B cell (primary cell): ENCODE measurements at regions of chr14 and their contacts with region 1.

Region 1: GRCh38 chr14:23301288-23301968 is 1.2 kb downstream of the PPP1R3E start:
- DNase-seq: peak; percentile 100
- ATAC-seq: peak; percentile 75
- H3K4me3 ChIP-seq: peak overlapping the region in 4 of 5 experiments; percentile 72 to 86 (median 82)
- H3K4me3 Mint-ChIP-seq: peak overlapping the region; percentile 98
- H3K27ac ChIP-seq: peak overlapping the region; percentile 95 to 96
- H3K27ac Mint-ChIP-seq: peak overlapping the region; percentile 95
- H3K4me1 ChIP-seq: peaks cover 24 to 26% of the 10 kb centered on the region in 2 donors
- H3K4me1 Mint-ChIP-seq: peaks cover 34% of the 10 kb centered on the region
- H3K27me3 ChIP-seq: no peaks in the 10 kb centered on the region
- H3K27me3 Mint-ChIP-seq: no peaks in the 10 kb centered on the region
- CTCF ChIP-seq: peak; percentile 81

Region 2: DNA sequence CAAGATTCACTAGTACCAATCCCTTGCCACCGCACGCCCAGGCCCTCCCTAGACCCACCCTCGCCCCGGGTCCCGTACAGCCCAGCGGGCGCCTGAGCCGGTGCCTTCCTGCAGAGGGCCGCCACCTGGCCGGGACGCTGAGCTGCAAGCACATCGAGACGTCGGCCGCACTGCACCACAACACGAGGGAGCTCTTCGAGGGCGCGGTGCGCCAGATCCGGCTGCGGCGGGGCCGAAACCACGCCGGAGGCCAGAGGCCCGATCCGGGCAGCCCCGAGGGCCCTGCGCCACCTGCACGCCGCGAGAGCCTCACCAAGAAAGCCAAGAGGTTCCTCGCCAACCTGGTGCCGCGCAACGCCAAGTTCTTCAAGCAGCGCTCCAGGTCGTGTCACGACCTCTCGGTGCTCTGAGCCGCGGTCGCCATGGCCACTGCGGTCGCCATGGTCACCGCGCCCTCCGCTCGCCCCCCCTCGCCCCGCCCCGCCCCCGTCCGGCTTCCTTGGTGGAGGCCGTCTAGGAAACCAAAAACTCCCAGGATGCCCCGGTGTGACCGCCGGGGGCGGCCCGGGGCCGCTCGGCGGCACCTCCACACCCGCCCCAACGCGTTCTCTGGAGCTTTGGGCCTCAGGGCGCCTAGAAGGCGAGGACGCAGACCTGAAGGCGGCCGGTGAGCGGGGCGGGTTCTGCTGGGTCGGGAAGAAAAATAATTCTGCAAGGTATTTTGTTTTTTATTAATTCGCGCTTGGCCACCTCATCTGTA is 414.7 kb before region 1 on chr14:
- CTCF ChIA-PET with region 1: no interaction called
- POLR2A ChIA-PET with region 1: no interaction called
- intact Hi-C with region 1: loop called (anchors 5 kb)
- DNase-seq: peak; percentile 89
- ATAC-seq: peak; percentile 62
- H3K4me3 ChIP-seq: peak overlapping the region; percentile 44 to 83 (median 67)
- H3K4me3 Mint-ChIP-seq: peak overlapping the region; percentile 97
- H3K27ac ChIP-seq: peak overlapping the region; percentile 85 to 94
- H3K27ac Mint-ChIP-seq: peak overlapping the region; percentile 99
- H3K4me1 ChIP-seq: peaks cover 55 to 83% of the 10 kb centered on the region in 2 donors
- H3K4me1 Mint-ChIP-seq: peaks cover 71% of the 10 kb centered on the region
- H3K27me3 ChIP-seq: no peaks in the 10 kb centered on the region
- H3K27me3 Mint-ChIP-seq: no peaks in the 10 kb centered on the region
- CTCF ChIP-seq: peak; percentile 42

Region 3: DNA sequence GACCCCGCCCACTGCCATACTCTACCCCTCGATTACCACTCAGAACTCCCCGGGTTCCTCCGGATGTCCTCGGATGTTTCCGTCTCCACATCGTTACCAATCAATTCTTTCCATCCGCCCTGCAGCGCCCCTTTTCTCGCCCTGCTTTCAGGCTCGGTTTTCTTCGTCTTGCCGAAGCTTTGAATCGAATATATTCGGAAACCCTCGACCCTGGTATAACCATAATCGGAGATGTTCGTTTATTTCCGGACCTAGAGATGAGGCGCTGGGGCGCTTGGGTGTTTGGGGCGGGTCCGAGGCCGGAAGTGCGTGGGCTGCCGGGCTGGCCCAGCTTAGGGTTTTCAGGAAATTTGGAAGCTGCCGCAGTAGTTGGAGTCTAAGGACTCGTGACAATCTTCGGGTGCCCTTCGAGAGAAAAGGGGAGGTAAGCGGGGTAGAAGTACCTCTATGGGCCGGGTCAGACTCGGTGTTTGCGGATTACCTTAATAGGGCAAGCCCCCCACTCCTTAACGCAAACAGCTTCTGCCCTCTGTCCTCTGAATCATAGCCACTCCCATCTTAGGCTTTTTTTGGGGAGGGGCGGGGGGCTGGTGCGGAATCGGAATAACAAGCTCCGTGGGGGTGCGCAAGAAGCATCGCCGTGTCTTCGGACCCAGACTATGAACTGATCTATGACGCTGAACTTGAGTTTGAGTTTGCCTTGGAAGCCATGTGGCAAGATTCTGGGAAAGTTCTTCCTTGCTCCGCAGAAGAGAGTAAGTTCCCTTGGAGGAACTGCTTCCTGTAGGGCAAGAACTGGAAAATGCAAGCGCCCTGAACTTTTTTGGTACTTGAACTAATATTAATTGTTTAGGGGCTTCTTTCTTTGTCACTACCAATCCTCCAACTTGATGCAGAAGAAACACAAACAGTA is 206.0 kb before region 1 on chr14 and contains the start of gene C14orf119:
- CTCF ChIA-PET with region 1: interaction called, 7 read pairs
- POLR2A ChIA-PET with region 1: interaction called, 11 read pairs
- intact Hi-C with region 1: loop called (anchors 1 kb)
- DNase-seq: peak; percentile 100
- ATAC-seq: peak; percentile 86
- H3K4me3 ChIP-seq: peak within 1 kb of the TSS; percentile 76 to 99 (median 94)
- H3K4me3 Mint-ChIP-seq: no peak within 1 kb of the TSS
- H3K27ac ChIP-seq: peak within 1 kb of the TSS; percentile 92 to 97
- H3K27ac Mint-ChIP-seq: no peak within 1 kb of the TSS
- H3K4me1 ChIP-seq: peaks cover 20 to 24% of the 10 kb centered on the region in 2 donors
- H3K4me1 Mint-ChIP-seq: peaks cover 34% of the 10 kb centered on the region
- H3K27me3 ChIP-seq: no peaks in the 10 kb centered on the region
- H3K27me3 Mint-ChIP-seq: no peaks in the 10 kb centered on the region
- CTCF ChIP-seq: no peak
- total RNA-seq, gene C14orf119: 30.6 and 38.5 TPM in 2 replicates

Region 4: GRCh38 chr14:23286020-23286905 is 15.2 kb before region 1 on chr14 and contains the start of gene HOMEZ:
- CTCF ChIA-PET with region 1: interaction called, 56 read pairs
- POLR2A ChIA-PET with region 1: interaction called, 26 read pairs
- intact Hi-C with region 1: loop called (anchors 1 kb)
- DNase-seq: peak; percentile 97
- ATAC-seq: peak; percentile 97
- H3K4me3 ChIP-seq: peak within 1 kb of the TSS; percentile 56 to 90 (median 83)
- H3K4me3 Mint-ChIP-seq: peak within 1 kb of the TSS; percentile 98
- H3K27ac ChIP-seq: peak within 1 kb of the TSS; percentile 49 to 83
- H3K27ac Mint-ChIP-seq: peak within 1 kb of the TSS; percentile 93
- H3K4me1 ChIP-seq: peaks cover 13 to 17% of the 10 kb centered on the region in 2 donors
- H3K4me1 Mint-ChIP-seq: peaks cover 23% of the 10 kb centered on the region
- H3K27me3 ChIP-seq: no peaks in the 10 kb centered on the region
- H3K27me3 Mint-ChIP-seq: no peaks in the 10 kb centered on the region
- CTCF ChIP-seq: no peak
- total RNA-seq, gene HOMEZ: 15.5 TPM in 2 replicates

Region 5: GRCh38 chr14:23469127-23469905 is 167.9 kb after region 1 on chr14 and contains the start of gene NGDN:
- CTCF ChIA-PET with region 1: no interaction called
- POLR2A ChIA-PET with region 1: no interaction called
- intact Hi-C with region 1: loop called (anchors 1 kb)
- DNase-seq: peak; percentile 98
- ATAC-seq: peak; percentile 93
- H3K4me3 ChIP-seq: peak within 1 kb of the TSS; percentile 77 to 94 (median 92)
- H3K4me3 Mint-ChIP-seq: no peak within 1 kb of the TSS
- H3K27ac ChIP-seq: peak within 1 kb of the TSS; percentile 86 to 87
- H3K27ac Mint-ChIP-seq: no peak within 1 kb of the TSS
- H3K4me1 ChIP-seq: peaks cover 11 to 15% of the 10 kb centered on the region in 2 donors
- H3K4me1 Mint-ChIP-seq: peaks cover 7% of the 10 kb centered on the region
- H3K27me3 ChIP-seq: no peaks in the 10 kb centered on the region
- H3K27me3 Mint-ChIP-seq: peaks cover 7% of the 10 kb centered on the region
- CTCF ChIP-seq: peak; percentile 86
- total RNA-seq, gene NGDN: 81.8 and 84.4 TPM in 2 replicates

Region 6: DNA sequence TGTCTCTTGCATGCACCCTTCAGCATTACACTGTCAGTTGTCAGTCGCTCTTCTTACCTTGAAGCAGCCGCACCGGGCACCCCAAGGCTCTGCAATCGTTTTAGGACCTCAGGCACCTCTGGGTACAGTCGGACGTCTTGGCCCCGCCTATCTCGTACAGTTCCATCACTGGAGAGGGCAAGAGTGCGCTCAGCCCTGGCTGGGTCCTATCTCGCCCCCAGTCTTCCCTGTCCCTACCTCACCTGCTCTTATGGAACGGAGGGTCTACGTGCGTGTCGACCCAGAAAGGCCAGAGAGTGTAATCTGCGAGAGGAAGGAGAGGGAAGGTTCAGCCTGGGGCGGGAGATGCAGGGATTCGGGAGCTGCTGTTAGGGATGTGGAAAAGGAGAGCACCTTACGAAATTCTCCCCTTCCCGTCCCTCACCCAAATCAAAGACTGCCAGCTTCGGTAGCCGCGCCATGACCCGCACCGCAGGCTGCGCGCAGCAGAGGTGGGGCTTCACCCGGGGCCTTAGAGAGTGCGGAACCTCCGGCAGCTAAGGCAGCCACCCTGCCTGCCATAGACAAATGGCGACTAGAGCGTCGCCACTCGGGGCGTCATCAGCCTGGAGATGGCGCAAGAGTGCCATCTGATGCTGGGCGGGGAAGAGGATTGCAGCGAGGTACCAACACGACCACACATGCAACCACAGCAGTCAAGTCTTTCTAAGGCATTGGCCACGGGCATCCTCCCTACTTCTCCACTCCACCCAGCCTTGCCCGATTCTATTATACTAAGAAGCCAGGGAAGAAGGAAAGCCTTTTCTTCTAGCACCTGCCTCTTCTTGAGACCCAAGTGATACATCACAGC is 914.3 kb after region 1 on chr14 and contains the start of gene MDP1:
- CTCF ChIA-PET with region 1: no interaction called
- POLR2A ChIA-PET with region 1: no interaction called
- intact Hi-C with region 1: loop called (anchors 2 kb)
- DNase-seq: peak; percentile 94
- ATAC-seq: peak; percentile 75
- H3K4me3 ChIP-seq: peak within 1 kb of the TSS; percentile 88 to 99 (median 96)
- H3K4me3 Mint-ChIP-seq: peak within 1 kb of the TSS; percentile 93
- H3K27ac ChIP-seq: peak within 1 kb of the TSS; percentile 89 to 98
- H3K27ac Mint-ChIP-seq: peak within 1 kb of the TSS; percentile 96
- H3K4me1 ChIP-seq: peaks cover 32 to 33% of the 10 kb centered on the region in 2 donors
- H3K4me1 Mint-ChIP-seq: peaks cover 38% of the 10 kb centered on the region
- H3K27me3 ChIP-seq: no peaks in the 10 kb centered on the region
- H3K27me3 Mint-ChIP-seq: no peaks in the 10 kb centered on the region
- CTCF ChIP-seq: peak; percentile 80
- total RNA-seq, gene MDP1: 11.3 and 17.0 TPM in 2 replicates